Activated B cell treated with CpG ODN at 0.5 μM for 24 hours (primary cell): ENCODE measurements at regions of chr2 and their contacts with region 1.

Region 1: DNA sequence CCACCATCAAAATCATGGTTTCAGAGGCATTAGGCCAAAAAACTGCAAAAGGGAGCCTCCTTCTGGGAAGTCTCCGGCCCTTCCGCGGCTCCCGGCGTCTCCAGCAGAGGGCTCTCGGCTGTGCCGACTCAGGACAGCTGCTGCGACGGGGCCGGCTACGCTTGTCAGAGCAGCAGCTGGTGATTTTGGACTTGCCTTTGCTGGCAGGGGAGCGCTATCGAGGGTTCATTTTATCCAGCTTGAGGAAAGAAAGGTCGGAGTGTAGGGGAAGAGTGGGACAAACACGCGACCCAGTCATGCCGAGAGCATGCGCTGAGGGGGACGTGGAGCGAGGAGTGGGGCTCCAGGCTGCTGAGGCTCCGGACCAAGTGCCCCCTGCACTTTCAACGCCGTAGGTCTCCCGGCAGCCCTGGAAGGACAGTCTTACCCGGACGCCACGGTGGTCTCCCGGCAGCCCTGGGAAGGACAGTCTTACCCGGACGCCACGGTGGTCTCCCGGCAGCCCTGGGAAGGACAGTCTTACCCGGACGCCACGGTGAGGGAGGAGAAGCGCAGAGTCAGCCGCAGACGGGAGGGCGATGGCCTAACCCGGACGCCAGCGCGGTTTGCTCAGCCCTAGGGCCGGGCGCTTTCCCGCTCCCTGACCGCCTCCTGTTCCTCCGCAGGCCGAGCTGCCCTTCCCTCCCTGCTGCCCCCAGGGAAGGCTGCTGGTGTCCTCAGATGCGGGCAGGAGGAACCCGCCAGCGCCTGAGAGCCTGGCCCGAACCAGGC is 21.7 kb downstream of the DDX18 start:
- DNase-seq: peak; percentile 51
- ATAC-seq: peak; percentile 89
- H3K4me3 Mint-ChIP-seq: peak overlapping the region; percentile 86
- H3K27ac Mint-ChIP-seq: no peak overlapping the region
- H3K4me1 Mint-ChIP-seq: peaks cover 10% of the 10 kb centered on the region
- H3K27me3 Mint-ChIP-seq: peaks cover 11% of the 10 kb centered on the region
- CTCF ChIP-seq: no peak

Region 2: GRCh38 chr2:118003396-118003824 is 167.2 kb after region 1 on chr2:
- CTCF ChIA-PET with region 1: interaction called, 12 read pairs
- POLR2A ChIA-PET with region 1: no interaction called
- intact Hi-C with region 1: loop called (anchors 1 kb)
- DNase-seq: peak; percentile 17
- ATAC-seq: peak; percentile 96
- H3K4me3 Mint-ChIP-seq: no peak overlapping the region
- H3K27ac Mint-ChIP-seq: no peak overlapping the region
- H3K4me1 Mint-ChIP-seq: peaks cover 4% of the 10 kb centered on the region
- H3K27me3 Mint-ChIP-seq: no peaks in the 10 kb centered on the region
- CTCF ChIP-seq: peak; percentile 60